Activated CD4-positive, alpha-beta T cell treated with anti-CD3 and anti-CD28 coated beads, Interleukin-2, amount 10 ng/mL, durations not matched to agents 7 days and 5 days (primary cell): ENCODE measurements at regions of chr2 and their contacts with region 1.

Region 1: DNA sequence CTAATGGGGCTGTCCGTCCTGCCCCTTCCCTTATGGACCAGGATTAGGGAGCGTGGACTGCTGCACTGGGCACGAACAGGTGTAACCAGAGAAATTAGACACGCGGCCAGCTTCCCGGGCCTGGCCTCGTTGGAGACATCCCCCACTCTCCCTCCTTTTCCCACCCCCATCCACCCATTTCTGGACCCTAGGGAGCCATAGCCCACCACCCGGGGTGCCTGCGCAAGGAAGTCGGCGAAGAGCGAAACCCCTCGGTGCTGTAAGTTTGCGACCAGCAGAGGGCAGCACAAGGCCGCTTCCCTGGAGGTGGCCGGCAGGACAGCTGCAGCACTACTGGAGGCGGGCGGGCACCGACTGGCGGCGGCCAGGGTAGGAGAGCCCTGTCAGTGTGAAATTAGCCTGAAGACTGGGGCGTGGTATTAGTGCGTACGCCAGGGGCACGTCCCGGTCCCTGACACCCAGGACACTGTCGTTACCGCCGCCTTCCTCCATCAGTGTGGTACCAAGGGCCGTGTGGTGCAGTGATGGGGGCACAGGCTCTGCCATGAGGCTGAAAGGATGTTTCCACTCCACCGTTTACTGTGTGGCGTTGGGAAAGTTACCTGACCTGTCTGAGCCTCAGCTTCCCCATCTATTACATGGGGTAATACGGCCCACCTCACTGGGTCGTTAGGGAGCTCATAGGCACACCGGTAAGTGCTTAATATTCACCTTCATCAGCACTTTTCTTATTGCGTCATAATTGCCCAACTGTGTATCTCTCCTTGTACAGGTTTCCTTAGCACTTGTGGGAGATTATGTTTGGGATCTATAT is 36.0 kb upstream of the CD207 start:
- DNase-seq: peak; percentile 82
- H3K4me3 Mint-ChIP-seq: no peak overlapping the region
- H3K27ac Mint-ChIP-seq: no peak overlapping the region
- H3K4me1 Mint-ChIP-seq: peaks cover 3% of the 10 kb centered on the region
- H3K27me3 Mint-ChIP-seq: peaks cover 32% of the 10 kb centered on the region

Region 2: GRCh38 chr2:70467831-70468779 is 403.5 kb before region 1 on chr2:
- CTCF ChIA-PET with region 1: no interaction called
- POLR2A ChIA-PET with region 1: no interaction called
- DNase-seq: no peak
- H3K4me3 Mint-ChIP-seq: no peak overlapping the region
- H3K27ac Mint-ChIP-seq: no peak overlapping the region
- H3K4me1 Mint-ChIP-seq: peaks cover 11% of the 10 kb centered on the region
- H3K27me3 Mint-ChIP-seq: peaks cover 4% of the 10 kb centered on the region

Region 3: DNA sequence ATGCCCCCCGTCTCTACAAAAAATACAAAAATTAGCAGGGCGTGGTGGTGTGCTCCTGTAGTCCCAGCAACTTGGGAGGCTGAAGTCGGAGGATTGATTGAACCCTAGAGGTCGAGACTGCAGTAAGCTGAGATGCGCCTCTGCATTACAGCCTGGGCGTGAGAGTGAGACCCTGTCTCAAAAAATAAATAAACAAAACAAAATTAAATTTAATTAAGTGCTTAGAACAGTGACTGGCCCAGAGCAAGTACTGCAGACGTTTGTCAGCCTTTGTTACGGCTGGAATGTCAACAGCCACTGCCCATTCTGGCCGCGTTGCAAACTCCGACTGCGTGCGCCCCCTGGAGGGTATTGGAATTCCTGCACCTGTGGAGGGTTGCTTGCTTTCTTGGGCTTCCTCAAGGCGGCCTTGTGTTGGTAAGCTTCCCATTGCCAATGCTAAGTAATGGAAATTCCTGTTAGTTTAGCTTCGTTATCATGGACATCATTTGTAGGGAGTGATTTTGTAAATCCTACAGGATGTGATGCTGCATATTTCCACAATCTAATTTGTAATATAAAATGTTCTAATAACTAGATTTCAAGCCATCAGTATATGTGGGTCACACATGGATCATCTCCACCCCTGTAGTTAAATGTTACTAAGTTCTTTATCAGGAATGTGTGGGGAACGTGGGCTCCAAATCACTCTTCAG is 48.2 kb after region 1 on chr2:
- CTCF ChIA-PET with region 1: interaction called, 25 read pairs
- POLR2A ChIA-PET with region 1: no interaction called
- DNase-seq: peak; percentile 72
- H3K4me3 Mint-ChIP-seq: no peak overlapping the region
- H3K27ac Mint-ChIP-seq: no peak overlapping the region
- H3K4me1 Mint-ChIP-seq: no peaks in the 10 kb centered on the region
- H3K27me3 Mint-ChIP-seq: peaks cover 16% of the 10 kb centered on the region

Region 4: GRCh38 chr2:70948337-70949003 is 76.9 kb after region 1 on chr2:
- CTCF ChIA-PET with region 1: interaction called, 17 read pairs
- POLR2A ChIA-PET with region 1: no interaction called
- DNase-seq: peak; percentile 79
- H3K4me3 Mint-ChIP-seq: peak overlapping the region; percentile 53
- H3K27ac Mint-ChIP-seq: no peak overlapping the region
- H3K4me1 Mint-ChIP-seq: peaks cover 11% of the 10 kb centered on the region
- H3K27me3 Mint-ChIP-seq: peaks cover 24% of the 10 kb centered on the region